ENCODE measurements at regions of chr1 and their contacts with region 1.

Region 1: DNA sequence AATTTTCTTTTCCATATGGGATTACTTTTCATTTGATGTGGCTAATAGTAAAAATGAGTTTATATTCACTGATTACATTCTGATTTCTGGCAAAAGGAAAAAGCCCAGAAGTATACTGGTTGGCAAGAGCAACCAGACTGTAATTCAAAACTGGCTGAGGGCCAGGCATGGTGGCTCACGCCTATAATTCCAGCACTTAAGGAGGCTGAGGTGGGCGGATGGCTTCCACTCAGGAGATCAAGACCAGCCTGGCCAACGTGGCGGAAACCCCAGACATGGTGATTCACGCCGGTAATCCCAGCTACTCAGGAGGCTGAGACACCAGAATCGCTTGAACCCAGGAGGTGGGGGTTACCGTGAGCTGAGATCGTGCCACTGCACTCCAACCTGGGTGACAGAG is 14.5 kb downstream of the SYT11 start:
- DNase-seq: peak; percentile 56
- H3K4me3 ChIP-seq: no peak overlapping the region
- H3K27ac ChIP-seq: no peak overlapping the region
- H3K4me1 ChIP-seq: no peaks in the 10 kb centered on the region
- H3K27me3 ChIP-seq: no peaks in the 10 kb centered on the region
- CTCF ChIP-seq: no peak
- POLR2A ChIP-seq: no peak

Region 2: DNA sequence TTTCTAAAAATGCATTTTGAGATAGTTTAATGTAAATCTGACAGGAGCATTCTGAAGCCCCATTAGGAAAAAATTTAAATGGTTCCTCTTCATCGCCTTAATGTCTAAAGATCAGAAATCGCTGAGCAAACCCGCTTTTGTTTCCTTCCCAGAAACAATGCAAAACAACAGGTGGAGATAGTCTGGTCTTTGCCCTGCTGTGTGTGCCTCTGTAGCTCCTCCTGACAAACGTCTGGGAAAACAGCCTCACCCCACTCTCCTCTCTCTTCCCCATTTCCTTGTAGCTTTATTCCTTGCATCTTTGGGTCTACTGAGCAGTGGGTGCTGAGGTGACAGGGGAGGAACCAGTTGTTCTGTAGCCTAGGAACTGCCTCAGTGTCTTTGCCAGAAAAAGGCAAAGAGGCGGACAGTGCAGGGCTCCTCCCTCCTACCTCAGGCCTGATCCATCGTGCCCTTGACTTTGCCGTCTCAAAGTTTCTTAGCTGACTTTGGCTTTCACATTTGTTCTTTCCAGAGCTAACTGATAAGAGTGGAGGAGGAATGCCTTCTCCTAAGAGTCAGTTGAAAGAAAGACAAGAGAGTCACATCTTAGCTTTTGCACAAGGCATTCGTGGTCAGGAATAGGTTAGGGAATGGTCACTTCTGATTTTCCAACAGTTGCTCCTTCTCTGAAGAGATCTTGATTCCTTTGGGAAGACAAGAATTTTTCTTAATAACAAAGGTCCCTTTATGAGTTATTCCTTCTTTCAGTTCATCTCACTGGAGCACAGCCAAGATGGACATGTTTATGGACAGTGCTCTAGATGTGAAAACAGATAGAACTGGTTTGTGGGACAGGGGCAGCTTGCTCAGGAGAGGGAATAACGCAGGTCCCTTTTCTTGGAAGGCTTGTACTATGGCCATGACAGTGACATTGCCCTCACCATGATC is 10.4 kb after region 1 on chr1:
- CTCF ChIA-PET with region 1: interaction called, 18 read pairs
- POLR2A ChIA-PET with region 1: no interaction called
- dilution Hi-C with region 1: no loop called
- intact Hi-C with region 1: no loop called
- DNase-seq: no peak
- H3K4me3 ChIP-seq: no peak overlapping the region
- H3K27ac ChIP-seq: no peak overlapping the region
- H3K4me1 ChIP-seq: peaks cover 3% of the 10 kb centered on the region
- H3K27me3 ChIP-seq: no peaks in the 10 kb centered on the region
- CTCF ChIP-seq: no peak
- POLR2A ChIP-seq: no peak

Region 3: GRCh38 chr1:155913969-155914757 is 40.3 kb after region 1 on chr1:
- CTCF ChIA-PET with region 1: no interaction called
- POLR2A ChIA-PET with region 1: no interaction called
- dilution Hi-C with region 1: no loop called
- intact Hi-C with region 1: no loop called
- DNase-seq: no peak
- H3K4me3 ChIP-seq: no peak overlapping the region
- H3K27ac ChIP-seq: no peak overlapping the region
- H3K4me1 ChIP-seq: peaks cover 13% of the 10 kb centered on the region
- H3K27me3 ChIP-seq: no peaks in the 10 kb centered on the region
- CTCF ChIP-seq: no peak
- POLR2A ChIP-seq: no peak